CD8-positive, alpha-beta T cell (primary cell): ENCODE measurements at regions of chr20 and their contacts with region 1.

Region 1: DNA sequence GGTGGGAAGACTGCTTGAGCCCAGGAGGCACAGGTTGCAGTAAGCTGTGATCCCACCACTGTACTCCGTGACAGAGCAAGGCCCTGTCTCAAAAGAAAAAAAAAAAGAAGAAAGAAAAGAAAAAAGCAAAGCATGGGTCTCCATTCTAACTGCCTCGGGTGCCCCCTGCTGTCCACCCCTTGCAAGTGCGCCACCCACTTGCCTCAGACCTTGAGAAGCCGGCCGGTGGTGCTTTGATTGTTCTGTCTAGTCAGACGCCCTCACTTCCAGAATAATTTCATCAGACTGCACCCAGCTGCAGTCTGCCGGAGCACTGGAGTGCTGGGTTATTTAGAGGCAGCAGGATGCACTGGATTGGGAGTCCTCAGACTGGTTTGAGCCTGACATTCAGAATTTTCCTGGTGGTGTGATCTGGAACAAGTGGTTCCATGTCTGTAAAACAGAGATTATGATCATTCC is 17.6 kb upstream of the TM9SF4 start:
- DNase-seq: peak; percentile 56 to 80 (median 77)
- ATAC-seq: peak; percentile 98
- H3K4me3 ChIP-seq: no peak overlapping the region
- H3K4me3 Mint-ChIP-seq: no peak overlapping the region
- H3K27ac ChIP-seq: no peak overlapping the region
- H3K27ac Mint-ChIP-seq: no peak overlapping the region
- H3K4me1 ChIP-seq: no peaks in the 10 kb centered on the region
- H3K4me1 Mint-ChIP-seq: no peaks in the 10 kb centered on the region
- H3K27me3 ChIP-seq: no peaks in the 10 kb centered on the region
- H3K27me3 Mint-ChIP-seq: peaks cover 9% of the 10 kb centered on the region
- CTCF ChIP-seq: peak; percentile 94

Region 2: DNA sequence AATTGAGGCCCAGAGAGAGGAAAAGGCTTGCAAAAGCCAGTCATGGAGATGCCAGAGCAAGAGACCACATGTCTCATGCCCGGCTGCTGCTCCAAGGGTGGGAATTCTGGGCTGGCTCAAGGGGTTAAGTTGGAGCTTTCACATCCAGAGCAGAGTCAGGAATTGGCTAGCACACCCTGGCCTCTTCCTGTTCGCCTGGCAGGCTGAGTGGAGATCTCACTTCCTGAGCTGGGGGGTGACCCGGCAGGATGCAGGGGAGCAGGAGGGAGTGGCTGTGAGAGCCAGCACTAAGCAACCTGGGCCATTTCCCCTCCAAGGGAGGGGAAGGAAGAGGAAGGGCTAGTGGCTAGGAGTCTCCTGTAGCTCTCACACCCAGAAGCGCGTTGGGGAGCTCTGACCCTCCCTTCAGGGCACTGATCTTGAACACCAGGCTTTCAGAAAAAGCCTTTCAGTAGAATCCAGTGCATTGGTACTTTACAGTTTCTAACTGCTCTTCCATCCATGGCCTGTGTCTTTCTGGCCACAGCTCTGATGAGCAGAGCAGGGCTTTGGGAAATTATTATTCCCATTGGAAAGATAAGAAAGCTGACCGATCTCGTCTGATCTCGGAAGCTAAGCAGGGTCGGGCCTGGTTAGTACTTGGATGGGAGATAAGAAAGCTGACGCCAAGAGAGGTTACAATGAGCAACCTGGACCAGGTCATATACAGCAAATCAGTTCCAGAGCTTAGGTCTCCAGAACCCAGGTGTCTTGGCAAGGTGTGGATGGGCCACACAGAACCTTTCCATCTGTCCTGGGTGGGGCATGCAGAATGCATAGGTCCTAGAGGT is 83.9 kb before region 1 on chr20:
- CTCF ChIA-PET with region 1: no interaction called
- POLR2A ChIA-PET with region 1: no interaction called
- intact Hi-C with region 1: no loop called
- DNase-seq: no peak
- ATAC-seq: no peak
- H3K4me3 ChIP-seq: no peak overlapping the region
- H3K4me3 Mint-ChIP-seq: no peak overlapping the region
- H3K27ac ChIP-seq: no peak overlapping the region
- H3K27ac Mint-ChIP-seq: no peak overlapping the region
- H3K4me1 ChIP-seq: no peaks in the 10 kb centered on the region
- H3K4me1 Mint-ChIP-seq: no peaks in the 10 kb centered on the region
- H3K27me3 ChIP-seq: no peaks in the 10 kb centered on the region
- H3K27me3 Mint-ChIP-seq: peaks cover 10% of the 10 kb centered on the region
- CTCF ChIP-seq: no peak

Region 3: DNA sequence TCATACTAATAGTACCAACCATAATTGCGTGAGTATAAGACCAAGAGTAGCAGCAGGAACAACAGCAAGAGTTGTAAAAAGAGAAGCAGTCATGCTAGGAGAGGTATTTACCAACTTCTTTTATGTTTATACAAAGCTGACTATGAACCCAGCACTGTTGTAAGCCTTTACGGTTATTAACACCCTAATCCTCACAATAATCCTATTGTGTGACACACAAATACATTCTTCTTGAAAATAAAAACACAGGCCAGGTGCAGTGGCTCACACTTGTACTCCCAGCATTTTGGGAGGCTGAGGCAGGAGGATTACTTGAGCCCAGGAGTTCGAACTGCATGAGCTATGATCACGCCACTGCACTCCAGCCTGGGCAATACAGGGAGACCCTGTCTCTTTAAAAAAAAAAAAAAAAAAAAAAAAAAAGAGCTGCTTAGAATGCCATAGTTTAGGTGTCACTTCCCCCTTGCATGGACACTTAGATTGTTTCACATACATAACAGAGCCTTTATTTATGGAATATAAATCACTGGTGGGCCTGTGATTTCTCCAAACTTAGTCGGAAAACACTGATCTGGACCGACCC is 19.7 kb before region 1 on chr20:
- CTCF ChIA-PET with region 1: interaction called, 10 read pairs
- POLR2A ChIA-PET with region 1: no interaction called
- intact Hi-C with region 1: no loop called
- DNase-seq: no peak
- ATAC-seq: no peak
- H3K4me3 ChIP-seq: no peak overlapping the region
- H3K4me3 Mint-ChIP-seq: no peak overlapping the region
- H3K27ac ChIP-seq: no peak overlapping the region
- H3K27ac Mint-ChIP-seq: no peak overlapping the region
- H3K4me1 ChIP-seq: no peaks in the 10 kb centered on the region
- H3K4me1 Mint-ChIP-seq: no peaks in the 10 kb centered on the region
- H3K27me3 ChIP-seq: no peaks in the 10 kb centered on the region
- H3K27me3 Mint-ChIP-seq: peaks cover 21% of the 10 kb centered on the region
- CTCF ChIP-seq: no peak

Region 4: DNA sequence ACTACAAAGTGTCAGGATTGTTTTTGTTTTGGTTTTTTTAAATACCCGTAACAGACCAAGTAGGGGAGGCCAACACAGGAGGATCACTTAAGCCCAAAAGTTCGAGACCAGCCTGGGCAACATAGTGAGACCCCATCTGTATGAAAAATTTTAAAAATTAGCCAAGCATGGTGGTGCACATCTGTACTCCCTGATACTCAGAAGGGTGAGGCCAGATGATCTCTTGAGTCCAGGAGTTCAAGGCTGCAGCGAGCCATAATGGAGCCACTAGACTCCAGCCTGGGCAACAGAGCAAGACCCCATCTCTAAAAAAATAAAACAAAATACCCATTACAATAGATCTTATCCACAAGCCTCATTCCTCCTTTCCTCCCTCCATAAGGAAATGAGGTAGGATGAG is 11.1 kb before region 1 on chr20:
- CTCF ChIA-PET with region 1: interaction called, 16 read pairs
- POLR2A ChIA-PET with region 1: no interaction called
- intact Hi-C with region 1: no loop called
- DNase-seq: no peak
- ATAC-seq: no peak
- H3K4me3 ChIP-seq: no peak overlapping the region
- H3K4me3 Mint-ChIP-seq: no peak overlapping the region
- H3K27ac ChIP-seq: no peak overlapping the region
- H3K27ac Mint-ChIP-seq: no peak overlapping the region
- H3K4me1 ChIP-seq: no peaks in the 10 kb centered on the region
- H3K4me1 Mint-ChIP-seq: no peaks in the 10 kb centered on the region
- H3K27me3 ChIP-seq: no peaks in the 10 kb centered on the region
- H3K27me3 Mint-ChIP-seq: peaks cover 27% of the 10 kb centered on the region
- CTCF ChIP-seq: no peak

Region 5: DNA sequence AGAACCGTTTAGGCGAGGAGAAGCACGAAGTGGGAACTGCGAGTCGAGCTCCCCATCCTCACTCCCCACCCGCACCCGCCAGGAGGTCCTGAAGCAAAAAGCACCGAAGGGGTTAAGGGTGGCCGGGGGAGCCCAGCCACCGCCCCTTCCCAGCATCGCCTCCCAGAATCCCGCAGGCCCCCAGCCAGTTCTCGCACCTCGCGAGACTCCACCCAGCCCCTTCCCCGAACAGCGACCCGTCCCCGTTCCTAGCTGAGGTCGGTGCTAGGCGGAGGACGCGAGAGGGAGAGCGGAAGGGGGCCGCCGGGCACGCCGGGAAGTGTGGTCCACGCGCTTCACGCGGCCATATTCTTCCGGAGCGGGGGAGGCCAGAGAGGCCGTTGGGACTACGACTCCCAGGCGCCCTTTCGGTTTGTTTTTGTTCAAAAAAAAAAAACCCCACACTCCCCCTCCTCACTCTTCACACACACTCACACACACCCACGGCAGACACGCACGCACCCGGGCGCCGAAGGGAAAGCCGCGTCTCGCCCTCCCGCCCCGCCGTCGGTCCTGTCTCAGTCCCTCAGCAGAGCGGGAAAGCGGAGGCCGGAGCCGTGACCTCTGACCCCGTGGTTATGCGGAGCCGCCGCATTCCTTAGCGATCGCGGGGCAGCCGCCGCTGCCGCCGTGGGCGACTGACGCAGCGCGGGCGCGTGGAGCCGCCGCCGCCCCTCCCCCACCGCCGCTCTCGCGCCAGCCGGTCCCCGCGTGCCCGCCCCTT is 266.1 kb after region 1 on chr20 and contains the start of gene ASXL1:
- CTCF ChIA-PET with region 1: no interaction called
- POLR2A ChIA-PET with region 1: no interaction called
- intact Hi-C with region 1: no loop called
- DNase-seq: peak; percentile 79 to 96 (median 93)
- ATAC-seq: peak; percentile 89
- H3K4me3 ChIP-seq: peak within 1 kb of the TSS; percentile 72 to 84
- H3K4me3 Mint-ChIP-seq: peak within 1 kb of the TSS; percentile 95
- H3K27ac ChIP-seq: peak within 1 kb of the TSS; percentile 89 to 91
- H3K27ac Mint-ChIP-seq: peak within 1 kb of the TSS; percentile 97
- H3K4me1 ChIP-seq: peaks cover 41% of the 10 kb centered on the region
- H3K4me1 Mint-ChIP-seq: peaks cover 47% of the 10 kb centered on the region
- H3K27me3 ChIP-seq: no peaks in the 10 kb centered on the region
- H3K27me3 Mint-ChIP-seq: no peaks in the 10 kb centered on the region
- CTCF ChIP-seq: no peak
- total RNA-seq, gene ASXL1: 197 to 200 TPM